ENCODE measurements at regions of chrX and their contacts with region 1.

Region 1: DNA sequence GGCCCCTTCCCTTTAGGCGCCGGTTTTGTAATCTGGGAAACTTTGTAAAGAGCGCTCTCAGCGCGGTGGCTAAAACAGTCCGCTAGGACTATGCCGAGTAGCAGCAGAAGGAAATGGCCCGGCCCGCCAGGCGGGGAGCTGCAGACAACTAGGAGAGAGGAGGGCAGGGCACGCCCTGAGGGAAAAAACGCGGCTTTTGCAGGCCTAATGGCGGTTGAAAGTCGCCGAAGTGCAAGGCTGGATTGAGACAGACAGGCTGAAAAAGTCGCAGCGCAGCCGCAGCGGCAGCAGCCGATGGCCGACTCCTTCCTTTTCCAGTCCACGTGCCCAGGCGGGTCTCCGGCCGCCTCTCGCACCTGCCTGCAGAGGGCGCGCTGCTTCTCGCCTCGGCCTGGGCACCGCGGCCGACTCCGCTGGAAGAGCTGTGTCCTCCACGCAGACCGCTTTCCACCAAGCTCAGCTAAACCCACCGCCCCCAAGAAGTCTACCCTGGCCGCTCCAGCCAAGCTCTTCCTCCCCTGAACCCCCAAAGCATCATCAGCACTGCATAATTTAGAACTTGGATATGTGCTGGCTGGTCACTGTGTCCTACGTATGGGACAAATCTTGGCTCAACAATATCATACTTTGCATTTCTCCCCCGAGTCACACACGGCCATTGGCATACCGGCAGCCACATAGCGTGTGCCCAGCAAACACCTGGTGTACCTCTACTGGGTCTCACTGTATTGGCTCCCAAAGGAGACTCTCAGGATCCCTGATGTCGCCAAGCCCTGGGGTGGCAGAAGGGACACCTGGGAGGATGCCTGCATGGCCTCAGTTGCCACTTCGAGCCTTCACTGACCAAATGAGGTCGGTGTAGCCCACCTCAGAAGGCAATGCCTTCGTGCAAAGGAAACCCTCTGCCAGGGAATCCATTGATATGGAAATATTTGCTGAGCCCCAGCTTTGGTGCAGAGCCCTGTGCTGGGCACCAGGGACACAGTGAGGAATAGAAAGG is 14.5 kb downstream of the SLC25A5 start:
- DNase-seq: no peak
- H3K4me3 ChIP-seq: peak overlapping the region; percentile 48
- H3K27ac ChIP-seq: no peak overlapping the region
- H3K27me3 ChIP-seq: no peaks in the 10 kb centered on the region
- CTCF ChIP-seq: peak; percentile 60

Region 2: DNA sequence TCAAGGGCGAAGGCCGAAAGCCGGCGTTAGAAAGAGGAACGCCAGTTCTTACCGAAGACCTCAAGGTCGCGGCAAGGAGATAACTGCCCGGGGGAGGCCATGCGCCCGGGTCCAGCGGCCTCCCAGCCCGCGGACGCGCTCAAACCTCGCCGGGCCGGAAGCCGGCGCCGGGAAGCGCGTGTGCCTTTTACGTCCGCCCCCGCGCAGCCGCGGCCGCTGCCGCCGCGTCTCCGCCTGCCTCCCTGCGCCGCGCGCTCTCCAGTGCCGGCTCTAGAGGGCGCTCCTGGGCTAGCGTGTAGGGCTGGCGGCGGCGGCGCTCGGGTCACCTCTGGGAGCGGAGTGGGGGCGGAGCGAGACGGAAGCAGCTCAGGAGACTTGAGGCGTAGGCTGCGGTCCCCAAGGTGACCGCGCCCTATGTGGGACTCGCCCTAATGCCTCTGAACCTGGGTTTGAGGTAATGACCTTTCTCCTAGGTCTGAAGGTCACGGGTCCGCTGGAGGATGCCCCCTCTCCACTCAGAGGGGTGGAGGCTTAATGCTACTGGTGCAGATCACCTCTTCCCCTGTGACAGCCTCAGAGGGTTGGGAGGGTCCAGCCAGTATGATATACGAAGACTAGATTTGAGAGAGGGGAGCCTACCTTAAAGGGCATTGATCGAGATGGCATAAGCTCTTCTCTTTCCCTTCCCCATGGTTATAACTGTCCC is 13.7 kb before region 1 on chrX:
- CTCF ChIA-PET with region 1: interaction called, 20 read pairs
- POLR2A ChIA-PET with region 1: interaction called, 6 read pairs
- DNase-seq: no peak
- H3K4me3 ChIP-seq: peak overlapping the region; percentile 79
- H3K27ac ChIP-seq: peak overlapping the region; percentile 47
- H3K27me3 ChIP-seq: no peaks in the 10 kb centered on the region
- CTCF ChIP-seq: peak; percentile 50

Region 3: DNA sequence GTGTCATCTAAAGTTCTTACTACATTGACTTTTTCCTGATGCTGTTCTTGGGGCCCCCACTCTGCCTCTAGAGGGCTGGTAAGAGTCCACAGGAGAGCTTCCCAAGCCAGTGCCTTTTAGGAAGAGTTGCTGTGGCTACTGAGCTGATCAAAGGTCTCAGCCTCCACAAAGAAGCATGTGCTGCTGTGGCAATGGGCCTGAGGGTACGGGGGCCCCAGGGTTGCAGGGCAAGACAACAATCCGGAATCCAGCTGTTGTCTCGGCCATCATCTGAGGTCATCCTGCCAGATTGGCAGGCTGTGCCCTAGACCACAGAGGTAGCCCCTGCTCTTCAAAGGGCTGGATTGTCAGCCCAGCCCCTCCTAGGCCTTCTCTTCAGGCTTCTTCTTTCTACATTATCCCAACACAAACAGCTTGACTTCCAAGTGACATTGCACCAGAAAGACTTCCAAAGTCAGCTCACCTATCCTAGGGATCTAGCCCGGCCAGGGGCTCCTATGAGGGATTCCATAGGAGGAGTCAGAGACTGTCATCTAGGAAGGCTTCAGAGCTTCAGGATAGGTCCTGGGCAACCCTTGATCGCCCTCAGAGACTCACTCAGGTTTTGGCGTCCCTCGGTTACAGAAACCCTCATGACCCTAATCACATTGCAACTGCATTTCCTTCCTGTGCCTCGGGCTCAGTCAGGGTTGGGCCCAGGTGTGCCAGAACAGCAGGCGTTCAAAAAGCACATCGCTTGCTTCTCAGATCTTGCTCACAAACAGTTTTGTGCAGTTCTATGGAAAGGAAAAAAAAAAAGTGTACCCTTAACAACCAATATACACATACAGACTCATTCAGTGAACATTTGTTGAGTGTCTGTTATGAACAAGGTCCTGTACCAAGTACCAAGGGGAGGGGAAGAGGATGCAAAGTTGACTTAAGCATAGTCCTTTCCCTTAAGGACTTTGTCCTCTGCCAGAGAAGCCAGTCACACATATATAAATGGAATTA is 13.2 kb after region 1 on chrX:
- CTCF ChIA-PET with region 1: interaction called, 15 read pairs
- POLR2A ChIA-PET with region 1: no interaction called
- DNase-seq: no peak
- H3K4me3 ChIP-seq: no peak overlapping the region
- H3K27ac ChIP-seq: no peak overlapping the region
- H3K27me3 ChIP-seq: no peaks in the 10 kb centered on the region
- CTCF ChIP-seq: no peak

Measured in AG04450 (cell line).